ENCODE measurements at regions of chr7 and their contacts with region 1.

Region 1: GRCh38 chr7:100957832-100958421 is 8.6 kb downstream of the MUC3A start:
- DNase-seq: peak; percentile 45
- CTCF ChIP-seq: no peak

Region 2: DNA sequence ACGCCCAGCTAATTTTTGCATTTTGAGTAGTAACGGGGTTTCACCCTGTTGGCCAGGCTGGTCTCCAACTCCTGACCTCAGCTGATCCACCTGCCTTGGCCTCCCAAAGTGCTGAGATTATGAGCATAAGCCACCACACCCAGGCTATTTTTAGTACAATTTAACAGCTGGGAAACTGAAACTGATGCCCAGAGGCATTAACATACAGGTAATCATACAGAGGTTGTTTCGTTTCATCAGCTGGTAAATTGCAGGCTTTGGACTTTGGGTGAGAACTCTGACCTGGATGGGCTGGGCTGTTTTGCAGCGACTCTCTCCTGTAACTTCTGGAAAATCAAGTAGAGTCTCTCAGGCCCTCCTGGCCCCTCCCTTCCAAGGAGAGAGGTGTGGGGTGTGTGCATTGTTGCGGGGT is 56.0 kb before region 1 on chr7:
- in situ Hi-C with region 1: loop called (anchors 10 kb)
- DNase-seq: no peak
- CTCF ChIP-seq: no peak

Region 3: GRCh38 chr7:101201695-101202604 is 244.0 kb after region 1 on chr7:
- in situ Hi-C with region 1: no loop called
- DNase-seq: no peak
- CTCF ChIP-seq: no peak